Activated CD4-positive, alpha-beta memory T cell treated with anti-CD3 and anti-CD28 coated beads, Interleukin-2, amount 10 ng/mL, durations not matched to agents 7 days and 5 days (primary cell): ENCODE measurements at regions of chr17 and their contacts with region 1.

Region 1: DNA sequence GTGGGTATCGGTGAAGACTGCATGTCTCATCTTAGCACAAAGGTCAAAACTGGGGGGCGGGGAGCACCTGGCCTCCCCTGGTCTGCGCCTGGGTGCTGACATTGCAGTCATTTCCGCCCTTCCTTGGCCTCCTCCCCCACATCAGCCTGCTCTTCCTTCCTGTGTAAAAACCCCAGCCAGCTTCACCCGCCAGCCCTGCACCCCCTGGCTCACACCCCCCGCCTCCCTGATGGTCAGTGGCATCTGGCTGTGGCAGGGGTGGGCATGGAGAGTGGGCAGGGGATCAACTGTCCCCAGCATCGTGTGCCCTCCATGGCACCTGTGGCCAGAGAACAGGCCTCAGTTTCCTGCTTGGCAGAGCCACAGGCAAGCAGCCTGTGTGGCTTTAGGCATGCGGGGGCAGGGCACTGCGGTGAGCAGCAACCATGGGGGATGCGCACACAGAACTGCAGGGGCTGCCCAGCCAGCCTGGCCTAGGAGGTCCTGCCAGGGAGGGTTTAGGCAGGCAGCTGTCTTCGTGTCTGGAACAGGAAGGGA is 26.5 kb upstream of the LASP1NB start:
- DNase-seq: peak; percentile 86
- H3K4me3 Mint-ChIP-seq: peak overlapping the region; percentile 45
- H3K27ac Mint-ChIP-seq: peak overlapping the region; percentile 89
- H3K4me1 Mint-ChIP-seq: peaks cover 65% of the 10 kb centered on the region
- H3K27me3 Mint-ChIP-seq: no peaks in the 10 kb centered on the region

Region 2: DNA sequence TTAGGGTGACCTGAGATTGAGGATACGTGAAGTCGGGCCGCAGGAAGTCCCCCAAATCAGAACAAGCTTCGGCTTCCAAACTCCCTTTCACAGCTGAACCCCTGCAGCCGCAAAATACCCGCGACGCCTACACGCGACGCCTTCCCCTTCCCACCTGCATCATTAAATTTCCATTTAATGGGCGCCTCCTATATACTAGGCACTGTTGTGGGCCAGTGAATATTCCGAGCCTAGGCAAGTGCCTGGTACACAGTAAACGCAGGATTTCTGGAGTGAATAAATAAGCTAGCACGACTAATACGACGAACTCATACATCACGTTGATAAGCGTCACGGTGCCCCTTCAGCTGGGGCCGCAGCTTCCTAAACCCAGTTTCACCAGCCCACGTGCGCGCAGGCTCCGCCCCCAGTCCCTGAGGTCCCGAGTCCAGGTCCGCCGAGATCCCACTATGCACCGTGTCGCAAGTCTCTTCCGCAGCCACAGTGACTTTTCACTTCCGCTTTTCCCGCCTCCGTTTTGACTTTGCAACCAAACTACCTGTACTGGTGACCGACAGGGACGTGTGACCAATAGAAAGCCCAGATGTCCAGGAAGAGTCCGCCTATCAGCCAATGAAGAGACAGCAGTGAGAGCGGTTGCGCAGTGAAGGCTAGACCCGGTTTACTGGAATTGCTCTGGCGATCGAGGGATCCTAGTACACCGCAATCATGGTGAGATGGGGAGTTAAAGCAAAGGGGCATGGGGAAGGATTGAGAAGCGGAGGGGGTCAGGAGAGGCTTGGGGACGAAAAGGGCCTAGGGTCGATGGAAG is 146.6 kb before region 1 on chr17 and contains the start of gene PSMB3:
- CTCF ChIA-PET with region 1: no interaction called
- POLR2A ChIA-PET with region 1: no interaction called
- DNase-seq: peak; percentile 97
- H3K4me3 Mint-ChIP-seq: peak within 1 kb of the TSS; percentile 97
- H3K27ac Mint-ChIP-seq: peak within 1 kb of the TSS; percentile 94
- H3K4me1 Mint-ChIP-seq: peaks cover 47% of the 10 kb centered on the region
- H3K27me3 Mint-ChIP-seq: peaks cover 28% of the 10 kb centered on the region
- total RNA-seq, gene PSMB3: 241 to 242 TPM

Region 3: GRCh38 chr17:38824899-38825761 is 73.8 kb before region 1 on chr17 and contains the start of gene CWC25:
- CTCF ChIA-PET with region 1: no interaction called
- POLR2A ChIA-PET with region 1: interaction called, 11 read pairs
- DNase-seq: peak; percentile 97
- H3K4me3 Mint-ChIP-seq: peak within 1 kb of the TSS; percentile 99
- H3K27ac Mint-ChIP-seq: peak within 1 kb of the TSS; percentile 98
- H3K4me1 Mint-ChIP-seq: peaks cover 33% of the 10 kb centered on the region
- H3K27me3 Mint-ChIP-seq: no peaks in the 10 kb centered on the region
- total RNA-seq, gene CWC25: 29.0 to 30.1 TPM

Region 4: GRCh38 chr17:38853292-38854219 is 45.3 kb before region 1 on chr17 and contains the start of gene RPL23:
- CTCF ChIA-PET with region 1: interaction called, 3 read pairs
- POLR2A ChIA-PET with region 1: interaction called, 45 read pairs
- DNase-seq: peak; percentile 94
- H3K4me3 Mint-ChIP-seq: peak within 1 kb of the TSS; percentile 95
- H3K27ac Mint-ChIP-seq: peak within 1 kb of the TSS; percentile 98
- H3K4me1 Mint-ChIP-seq: peaks cover 49% of the 10 kb centered on the region
- H3K27me3 Mint-ChIP-seq: no peaks in the 10 kb centered on the region
- total RNA-seq, gene RPL23: 933 to 960 TPM

Region 5: GRCh38 chr17:38879878-38880682 is 18.8 kb before region 1 on chr17:
- CTCF ChIA-PET with region 1: interaction called, 6 read pairs
- POLR2A ChIA-PET with region 1: interaction called, 144 read pairs
- DNase-seq: no peak
- H3K4me3 Mint-ChIP-seq: no peak overlapping the region
- H3K27ac Mint-ChIP-seq: peak overlapping the region; percentile 28
- H3K4me1 Mint-ChIP-seq: peaks cover 85% of the 10 kb centered on the region
- H3K27me3 Mint-ChIP-seq: no peaks in the 10 kb centered on the region

Region 6: DNA sequence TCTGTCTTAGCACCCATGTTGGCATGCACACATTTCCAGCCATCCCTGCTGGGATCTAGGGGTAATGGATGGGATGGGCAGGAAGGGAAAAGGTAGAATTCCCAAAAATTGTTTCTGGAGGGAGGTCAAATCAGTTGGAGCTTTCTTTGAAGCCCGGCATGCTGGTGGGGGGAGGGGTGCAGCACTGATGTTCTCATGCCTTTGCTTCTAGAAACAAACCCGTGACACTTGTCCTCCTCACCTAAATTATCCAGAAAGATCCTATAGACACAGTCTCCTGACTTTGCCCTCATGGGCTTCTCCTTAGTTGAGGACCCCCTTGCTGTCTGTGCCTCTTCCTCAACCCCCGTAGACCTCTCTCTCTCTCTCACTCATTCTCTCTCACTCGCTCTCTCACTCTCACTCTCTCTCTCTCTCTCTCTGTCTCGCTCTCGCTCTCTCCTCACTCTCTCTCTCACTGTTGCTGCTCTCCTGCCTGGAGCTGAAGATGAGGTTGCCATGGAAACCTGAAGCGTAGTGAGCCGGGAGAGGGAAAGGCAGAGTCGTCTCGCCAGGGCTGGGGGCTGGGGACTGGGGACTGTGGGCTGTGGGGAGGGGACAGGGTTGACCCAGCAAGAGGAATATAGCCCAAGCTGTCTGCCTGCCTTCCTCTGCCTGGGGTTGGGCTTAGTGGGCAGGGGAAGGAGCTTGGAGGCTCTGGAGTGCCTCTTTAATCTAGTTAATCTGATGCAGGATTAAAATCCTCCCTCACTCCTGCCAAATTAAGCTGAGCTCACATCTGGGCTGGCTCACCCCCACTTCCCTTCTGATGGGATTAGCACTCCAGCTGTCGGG is 12.9 kb before region 1 on chr17:
- CTCF ChIA-PET with region 1: interaction called, 8 read pairs
- POLR2A ChIA-PET with region 1: interaction called, 14 read pairs
- DNase-seq: no peak
- H3K4me3 Mint-ChIP-seq: no peak overlapping the region
- H3K27ac Mint-ChIP-seq: peak overlapping the region; percentile 6
- H3K4me1 Mint-ChIP-seq: peaks cover 79% of the 10 kb centered on the region
- H3K27me3 Mint-ChIP-seq: no peaks in the 10 kb centered on the region